H1 (cell line): ENCODE measurements at regions of chr17 and their contacts with region 1.

Region 1: GRCh38 chr17:76384222-76384986 is at the start of gene SPHK1:
- DNase-seq: peak in 1 of 2 experiments; percentile 83
- H3K4me3 ChIP-seq: peak within 1 kb of the TSS; percentile 39 to 80 (median 60)
- H3K27ac ChIP-seq: no peak within 1 kb of the TSS
- H3K4me1 ChIP-seq: peaks cover 5 to 46% (median 22%) of the 10 kb centered on the region in 4 experiments
- H3K27me3 ChIP-seq: peaks cover 18 to 47% (median 33%) of the 10 kb centered on the region in 4 experiments; a peak in 6 of 7 replicates
- CTCF ChIP-seq: no peak
- EP300 ChIP-seq: no peak
- POLR2A ChIP-seq: no peak
- RAD21 ChIP-seq: no peak
- total RNA-seq, gene SPHK1: 2.4 and 2.6 TPM in 2 replicates

Region 2: GRCh38 chr17:76246080-76247066 is 138.0 kb before region 1 on chr17:
- CTCF ChIA-PET with region 1: no interaction called
- POLR2A ChIA-PET with region 1: no interaction called
- DNase-seq: no peak
- H3K4me3 ChIP-seq: no peak overlapping the region
- H3K27ac ChIP-seq: no peak overlapping the region
- H3K4me1 ChIP-seq: peaks cover 0 to 4% (median 1%) of the 10 kb centered on the region in 4 experiments; a peak in 3 of 7 replicates
- H3K27me3 ChIP-seq: peaks cover 0 to 13% (median 12%) of the 10 kb centered on the region in 4 experiments; a peak in 6 of 7 replicates
- CTCF ChIP-seq: no peak
- EP300 ChIP-seq: no peak
- POLR2A ChIP-seq: no peak
- RAD21 ChIP-seq: no peak

Region 3: DNA sequence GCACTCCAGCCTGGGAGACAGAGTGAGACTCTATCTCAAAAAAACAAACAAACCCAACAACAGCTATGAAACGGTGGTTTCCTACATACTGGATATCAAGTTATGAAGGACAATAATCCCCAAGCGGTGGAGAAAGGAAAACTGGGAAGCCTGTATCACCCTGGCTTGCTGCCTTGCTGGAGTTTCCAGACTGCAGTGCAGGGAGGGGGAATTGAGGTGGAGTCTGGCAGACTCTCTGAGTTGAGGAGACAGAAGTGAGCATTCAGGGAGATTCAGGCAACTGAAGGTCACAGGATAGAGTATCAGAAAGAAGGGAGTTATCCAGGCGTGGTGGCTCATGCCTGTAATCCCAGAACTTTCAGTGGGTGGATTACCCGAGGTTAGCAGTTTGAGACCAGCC is 88.2 kb before region 1 on chr17:
- CTCF ChIA-PET with region 1: interaction called, 13 read pairs
- POLR2A ChIA-PET with region 1: no interaction called
- DNase-seq: no peak
- H3K4me3 ChIP-seq: no peak overlapping the region
- H3K27ac ChIP-seq: no peak overlapping the region
- H3K4me1 ChIP-seq: no peaks in the 10 kb centered on the region
- H3K27me3 ChIP-seq: no peaks in the 10 kb centered on the region
- CTCF ChIP-seq: no peak
- EP300 ChIP-seq: no peak
- POLR2A ChIP-seq: no peak
- RAD21 ChIP-seq: no peak

Region 4: DNA sequence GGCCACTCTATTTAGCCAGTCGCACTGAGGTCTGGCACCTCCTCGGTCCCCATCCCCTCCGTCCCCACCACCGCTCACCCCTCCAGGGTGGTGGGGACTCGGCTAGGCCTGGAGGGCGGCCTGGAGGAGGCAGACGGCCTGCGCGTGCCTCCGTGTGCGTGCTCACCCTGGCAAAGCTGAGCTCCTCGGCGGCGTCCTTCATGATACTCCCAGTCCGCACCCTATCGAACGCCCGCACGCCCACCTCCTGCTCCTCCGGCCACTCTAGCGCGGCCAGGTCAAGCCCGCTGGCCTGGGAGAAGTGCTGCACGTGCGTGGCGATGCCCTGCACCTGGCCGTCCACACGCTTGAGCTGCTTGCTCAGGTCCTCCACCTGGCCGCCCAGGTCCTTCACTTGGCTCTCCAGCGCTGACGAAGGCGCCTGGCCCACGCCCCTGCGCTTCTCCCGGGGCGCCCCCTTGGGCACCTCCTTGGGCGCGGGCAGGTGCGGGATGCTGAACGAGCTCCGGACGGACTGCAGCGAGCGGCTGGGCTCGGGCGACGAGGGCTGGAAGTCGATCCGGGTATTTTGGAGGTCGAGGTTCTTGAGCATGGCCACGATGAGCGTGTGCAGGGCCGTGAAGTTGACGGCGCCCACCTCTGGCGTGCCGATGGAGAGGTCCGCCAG is 77.0 kb before region 1 on chr17:
- CTCF ChIA-PET with region 1: interaction called, 13 read pairs
- POLR2A ChIA-PET with region 1: interaction called, 3 read pairs
- DNase-seq: no peak
- H3K4me3 ChIP-seq: no peak overlapping the region
- H3K27ac ChIP-seq: no peak overlapping the region
- H3K4me1 ChIP-seq: no peaks in the 10 kb centered on the region
- H3K27me3 ChIP-seq: no peaks in the 10 kb centered on the region
- CTCF ChIP-seq: no peak
- EP300 ChIP-seq: no peak
- POLR2A ChIP-seq: no peak
- RAD21 ChIP-seq: no peak

Region 5: DNA sequence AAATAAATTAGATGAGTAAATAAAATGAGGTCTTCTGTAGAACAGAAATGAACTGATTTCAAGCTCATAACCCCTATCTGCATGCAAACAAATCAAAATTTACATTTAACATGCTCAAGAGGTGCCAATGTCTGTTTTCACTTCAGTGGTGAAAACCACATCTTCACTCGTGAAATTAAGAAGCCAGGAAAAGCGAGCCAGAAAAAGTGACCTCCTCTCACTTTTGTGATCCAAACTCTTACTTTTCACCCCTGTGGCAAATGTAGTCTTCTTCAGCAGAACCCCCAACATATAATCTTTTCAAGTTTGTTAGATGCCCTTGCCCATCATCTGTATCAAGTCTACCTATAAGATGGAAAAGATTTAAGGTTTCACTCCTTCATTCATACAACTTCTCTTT is 66.9 kb before region 1 on chr17:
- CTCF ChIA-PET with region 1: no interaction called
- POLR2A ChIA-PET with region 1: no interaction called
- DNase-seq: no peak
- H3K4me3 ChIP-seq: no peak overlapping the region
- H3K27ac ChIP-seq: no peak overlapping the region
- H3K4me1 ChIP-seq: no peaks in the 10 kb centered on the region
- H3K27me3 ChIP-seq: no peaks in the 10 kb centered on the region
- CTCF ChIP-seq: no peak
- EP300 ChIP-seq: no peak
- POLR2A ChIP-seq: no peak
- RAD21 ChIP-seq: no peak

Region 6: GRCh38 chr17:76353599-76354316 is 30.6 kb before region 1 on chr17 and contains the start of gene PRPSAP1:
- CTCF ChIA-PET with region 1: interaction called, 635 read pairs
- POLR2A ChIA-PET with region 1: interaction called, 13 read pairs
- DNase-seq: peak; percentile 68 to 91
- H3K4me3 ChIP-seq: peak within 1 kb of the TSS; percentile 67 to 87 (median 72)
- H3K27ac ChIP-seq: peak within 1 kb of the TSS; percentile 100
- H3K4me1 ChIP-seq: peaks cover 0 to 6% (median 0%) of the 10 kb centered on the region in 4 experiments; a peak in 3 of 7 replicates
- H3K27me3 ChIP-seq: no peaks in the 10 kb centered on the region
- CTCF ChIP-seq: peak in 1 of 3 experiments; percentile 2; a peak in 1 of 4 replicates
- EP300 ChIP-seq: no peak
- POLR2A ChIP-seq: peak; percentile 53 to 87
- RAD21 ChIP-seq: no peak
- total RNA-seq, gene PRPSAP1: 42.8 and 54.2 TPM in 2 replicates

Region 7: GRCh38 chr17:76370261-76370993 is 14.0 kb before region 1 on chr17:
- CTCF ChIA-PET with region 1: interaction called, 635 read pairs
- POLR2A ChIA-PET with region 1: interaction called, 9 read pairs
- DNase-seq: no peak
- H3K4me3 ChIP-seq: no peak overlapping the region
- H3K27ac ChIP-seq: no peak overlapping the region
- H3K4me1 ChIP-seq: peaks cover 0 to 4% (median 3%) of the 10 kb centered on the region in 4 experiments; a peak in 3 of 7 replicates
- H3K27me3 ChIP-seq: no peaks in the 10 kb centered on the region
- CTCF ChIP-seq: peak; percentile 33 to 45 (median 36); a peak in 3 of 4 replicates
- EP300 ChIP-seq: no peak
- POLR2A ChIP-seq: no peak
- RAD21 ChIP-seq: peak; percentile 2 to 4; a peak in 1 of 4 replicates

Region 8: DNA sequence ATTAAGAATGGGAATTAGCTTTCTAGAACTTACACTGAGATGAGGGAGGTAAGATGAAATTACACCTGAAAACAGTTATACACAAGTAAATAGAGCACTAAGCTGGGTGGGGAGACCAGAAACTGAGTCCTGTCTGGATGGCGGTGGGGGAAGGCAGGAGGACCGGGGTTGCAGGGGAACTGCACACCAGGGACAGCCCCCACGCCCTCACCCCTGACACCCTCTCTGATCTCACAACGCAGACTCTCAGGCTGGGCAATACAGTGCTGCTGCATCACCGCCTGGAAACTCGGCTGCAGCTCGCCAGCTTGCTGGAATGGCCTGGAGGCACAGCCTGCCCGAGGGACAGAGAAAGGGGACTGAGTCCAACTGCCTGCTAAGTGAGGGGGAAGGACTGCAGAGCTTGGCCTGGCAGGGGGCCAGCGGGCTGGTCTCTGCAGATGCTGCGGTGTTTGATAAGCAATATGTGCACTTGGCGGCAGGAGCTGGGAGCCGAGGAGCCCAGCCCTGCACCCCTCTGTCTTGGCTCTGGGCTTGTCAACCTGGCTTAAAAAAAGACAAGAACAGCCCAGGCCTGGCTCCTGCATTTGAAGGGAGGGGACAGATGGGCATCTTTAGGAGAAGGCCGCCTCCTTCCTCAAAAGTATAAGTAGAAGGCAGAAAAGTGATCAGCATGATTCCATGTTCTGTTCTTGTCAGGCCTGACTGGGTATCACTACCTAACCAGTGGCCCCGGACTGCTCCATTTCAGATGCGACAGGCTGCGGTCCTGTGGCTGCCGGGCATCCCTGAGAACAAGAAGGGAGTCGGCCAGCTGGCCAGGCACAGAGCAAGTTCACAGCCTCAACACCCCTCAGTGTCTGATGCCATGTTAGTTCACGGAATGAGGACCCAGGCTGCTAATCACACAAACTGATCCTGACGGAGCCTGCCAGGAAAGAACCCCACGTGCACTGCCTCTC is 30.2 kb after region 1 on chr17:
- CTCF ChIA-PET with region 1: interaction called, 84 read pairs
- POLR2A ChIA-PET with region 1: interaction called, 15 read pairs
- DNase-seq: no peak
- H3K4me3 ChIP-seq: no peak overlapping the region
- H3K27ac ChIP-seq: no peak overlapping the region
- H3K4me1 ChIP-seq: peaks cover 4 to 11% (median 6%) of the 10 kb centered on the region in 4 experiments
- H3K27me3 ChIP-seq: no peaks in the 10 kb centered on the region
- CTCF ChIP-seq: no peak
- EP300 ChIP-seq: no peak
- POLR2A ChIP-seq: no peak
- RAD21 ChIP-seq: no peak